Activated CD8-positive, alpha-beta T cell treated with anti-CD3 and anti-CD28 coated beads for 36 hours (primary cell): ENCODE measurements at regions of chr3 and their contacts with region 1.

Region 1: GRCh38 chr3:126147932-126148683 is 32.3 kb downstream of the ALDH1L1 start:
- DNase-seq: no peak
- ATAC-seq: no peak
- H3K4me3 Mint-ChIP-seq: no peak overlapping the region
- H3K27ac Mint-ChIP-seq: no peak overlapping the region
- H3K4me1 Mint-ChIP-seq: no peaks in the 10 kb centered on the region
- H3K27me3 Mint-ChIP-seq: peaks cover 1% of the 10 kb centered on the region
- CTCF ChIP-seq: no peak

Region 2: DNA sequence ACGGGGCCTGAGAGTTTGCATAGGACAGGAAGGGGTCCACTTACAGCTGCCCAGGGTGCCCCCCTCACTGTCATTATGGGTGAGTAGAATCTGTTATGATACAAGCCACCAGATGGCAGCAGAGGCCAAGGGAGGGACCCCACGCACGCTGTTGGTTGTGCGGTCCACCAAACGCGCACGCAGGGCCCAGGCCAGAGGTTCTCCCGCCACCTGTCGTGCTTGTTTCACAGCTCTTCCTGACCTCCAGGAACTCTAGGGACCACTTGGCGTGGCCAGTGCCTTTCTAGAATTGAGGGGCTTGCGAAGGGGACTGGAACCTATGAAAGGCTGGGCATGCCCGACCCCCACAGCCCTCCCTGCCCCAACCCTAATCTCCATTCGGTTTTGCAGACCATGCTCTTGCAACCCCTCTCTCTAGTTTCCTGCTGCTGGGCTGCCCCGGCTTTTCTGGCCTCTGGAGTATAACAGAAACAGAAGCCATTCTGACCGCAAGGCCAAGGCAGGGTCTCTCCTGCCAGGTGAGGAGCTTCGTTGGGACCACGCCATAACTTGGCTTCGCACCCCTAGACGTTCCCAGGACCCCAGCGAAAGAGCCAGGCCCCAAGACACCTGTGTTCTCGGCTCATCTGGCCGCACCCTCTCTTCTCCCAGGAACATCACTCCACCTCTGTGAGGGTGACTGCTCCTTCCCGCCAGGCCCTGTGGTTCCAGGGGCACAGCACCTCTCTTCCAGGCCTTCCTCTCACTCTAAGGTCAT is 13.7 kb before region 1 on chr3:
- CTCF ChIA-PET with region 1: interaction called, 12 read pairs
- POLR2A ChIA-PET with region 1: no interaction called
- intact Hi-C with region 1: no loop called
- DNase-seq: peak; percentile 72
- ATAC-seq: peak; percentile 80
- H3K4me3 Mint-ChIP-seq: no peak overlapping the region
- H3K27ac Mint-ChIP-seq: no peak overlapping the region
- H3K4me1 Mint-ChIP-seq: no peaks in the 10 kb centered on the region
- H3K27me3 Mint-ChIP-seq: peaks cover 17% of the 10 kb centered on the region
- CTCF ChIP-seq: peak; percentile 72

Region 3: DNA sequence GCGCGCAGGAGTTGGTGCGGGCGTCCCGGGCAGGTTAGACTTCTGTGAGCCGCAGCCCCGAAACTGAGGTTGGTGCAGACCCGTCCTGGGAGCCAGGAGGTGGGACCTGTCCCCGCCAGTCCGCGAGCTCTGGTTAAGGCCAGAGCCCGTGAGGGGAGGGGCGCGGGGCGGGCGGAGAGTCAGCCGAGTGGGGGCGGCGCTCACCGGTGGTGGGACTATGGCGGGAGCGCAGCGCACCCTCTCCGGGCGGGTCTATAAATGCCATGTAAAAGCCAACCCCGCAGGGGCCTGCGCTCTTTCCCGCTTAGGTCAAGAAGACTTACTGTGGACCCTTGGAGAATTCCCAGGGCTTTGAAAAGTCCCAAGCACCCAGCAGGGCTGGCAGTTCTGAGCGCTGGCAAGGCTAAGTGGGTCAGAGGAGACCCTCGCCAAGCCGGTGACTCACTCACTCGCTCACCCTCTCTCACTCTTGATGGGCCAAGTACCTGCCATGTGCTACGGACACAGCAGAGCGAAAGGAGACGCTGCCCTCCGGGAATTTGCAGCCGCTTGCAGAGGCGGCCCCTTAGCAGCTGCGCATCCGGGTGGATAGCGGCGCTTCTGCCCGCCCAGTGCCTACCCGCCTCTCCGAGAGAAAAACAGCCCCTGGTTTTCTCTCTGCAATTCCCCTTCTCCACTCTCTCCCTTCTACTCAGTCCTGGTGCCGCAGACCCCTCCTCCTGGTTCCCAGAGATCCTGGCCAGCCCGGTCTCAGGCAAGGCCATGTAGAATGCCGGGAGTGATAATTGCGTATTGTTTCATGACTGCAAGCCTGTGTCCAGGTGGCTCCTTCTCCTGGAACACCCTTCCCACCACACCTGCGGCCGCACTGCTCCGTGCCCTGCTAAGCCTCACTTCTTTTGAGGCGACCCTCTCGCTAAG is 32.6 kb after region 1 on chr3 and contains the start of gene ALDH1L1:
- CTCF ChIA-PET with region 1: no interaction called
- POLR2A ChIA-PET with region 1: no interaction called
- intact Hi-C with region 1: no loop called
- DNase-seq: no peak
- ATAC-seq: no peak
- H3K4me3 Mint-ChIP-seq: no peak within 1 kb of the TSS
- H3K27ac Mint-ChIP-seq: no peak within 1 kb of the TSS
- H3K4me1 Mint-ChIP-seq: no peaks in the 10 kb centered on the region
- H3K27me3 Mint-ChIP-seq: peaks cover 38% of the 10 kb centered on the region
- CTCF ChIP-seq: no peak
- total RNA-seq, gene ALDH1L1: not detected

Region 4: DNA sequence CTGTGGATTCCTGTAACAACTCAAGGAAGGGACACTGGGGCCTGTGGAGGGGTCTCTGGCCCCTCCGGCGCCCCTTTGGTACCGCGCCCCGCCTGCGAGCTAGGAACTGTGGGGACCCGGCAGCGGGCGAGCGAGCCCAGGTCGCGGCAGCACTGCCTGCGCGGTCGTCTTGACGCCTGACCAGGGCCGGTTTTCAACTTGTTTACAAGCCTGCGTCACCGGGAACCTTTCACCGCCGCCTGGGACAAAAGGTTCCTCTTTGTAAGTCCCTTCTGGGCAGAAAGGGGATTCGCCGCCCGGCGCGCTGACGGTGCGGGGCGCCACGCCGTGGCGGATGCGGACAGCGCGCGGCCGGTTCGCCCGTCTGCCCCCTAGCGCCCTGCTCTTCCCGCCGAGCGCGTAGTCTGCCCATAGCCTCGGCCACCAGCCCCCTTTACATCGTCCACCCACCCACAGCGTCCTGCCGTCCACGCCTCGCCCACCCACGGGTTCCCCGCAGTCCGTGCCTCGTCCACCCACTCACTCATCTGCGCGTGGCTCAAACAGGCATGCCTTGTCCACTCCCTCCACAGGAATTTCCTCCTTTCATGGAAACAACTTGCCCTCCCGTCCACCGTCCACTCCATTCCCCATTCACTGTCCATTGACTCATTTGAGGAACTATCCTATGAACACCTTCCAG is 241.1 kb after region 1 on chr3:
- CTCF ChIA-PET with region 1: no interaction called
- POLR2A ChIA-PET with region 1: no interaction called
- intact Hi-C with region 1: no loop called
- DNase-seq: peak; percentile 57
- ATAC-seq: peak; percentile 89
- H3K4me3 Mint-ChIP-seq: no peak overlapping the region
- H3K27ac Mint-ChIP-seq: no peak overlapping the region
- H3K4me1 Mint-ChIP-seq: peaks cover 8% of the 10 kb centered on the region
- H3K27me3 Mint-ChIP-seq: peaks cover 51% of the 10 kb centered on the region
- CTCF ChIP-seq: peak; percentile 84